Activated naive CD4-positive, alpha-beta T cell treated with anti-CD3 and anti-CD28 coated beads for 36 hours (primary cell): ENCODE measurements at regions of chr20 and their contacts with region 1.

Region 1: GRCh38 chr20:63442100-63442493 is 30.4 kb downstream of the KCNQ2 start:
- DNase-seq: peak; percentile 85
- H3K4me3 Mint-ChIP-seq: no peak overlapping the region
- H3K27ac Mint-ChIP-seq: no peak overlapping the region
- H3K4me1 Mint-ChIP-seq: peaks cover 20% of the 10 kb centered on the region
- H3K27me3 Mint-ChIP-seq: peaks cover 1% of the 10 kb centered on the region

Region 2: DNA sequence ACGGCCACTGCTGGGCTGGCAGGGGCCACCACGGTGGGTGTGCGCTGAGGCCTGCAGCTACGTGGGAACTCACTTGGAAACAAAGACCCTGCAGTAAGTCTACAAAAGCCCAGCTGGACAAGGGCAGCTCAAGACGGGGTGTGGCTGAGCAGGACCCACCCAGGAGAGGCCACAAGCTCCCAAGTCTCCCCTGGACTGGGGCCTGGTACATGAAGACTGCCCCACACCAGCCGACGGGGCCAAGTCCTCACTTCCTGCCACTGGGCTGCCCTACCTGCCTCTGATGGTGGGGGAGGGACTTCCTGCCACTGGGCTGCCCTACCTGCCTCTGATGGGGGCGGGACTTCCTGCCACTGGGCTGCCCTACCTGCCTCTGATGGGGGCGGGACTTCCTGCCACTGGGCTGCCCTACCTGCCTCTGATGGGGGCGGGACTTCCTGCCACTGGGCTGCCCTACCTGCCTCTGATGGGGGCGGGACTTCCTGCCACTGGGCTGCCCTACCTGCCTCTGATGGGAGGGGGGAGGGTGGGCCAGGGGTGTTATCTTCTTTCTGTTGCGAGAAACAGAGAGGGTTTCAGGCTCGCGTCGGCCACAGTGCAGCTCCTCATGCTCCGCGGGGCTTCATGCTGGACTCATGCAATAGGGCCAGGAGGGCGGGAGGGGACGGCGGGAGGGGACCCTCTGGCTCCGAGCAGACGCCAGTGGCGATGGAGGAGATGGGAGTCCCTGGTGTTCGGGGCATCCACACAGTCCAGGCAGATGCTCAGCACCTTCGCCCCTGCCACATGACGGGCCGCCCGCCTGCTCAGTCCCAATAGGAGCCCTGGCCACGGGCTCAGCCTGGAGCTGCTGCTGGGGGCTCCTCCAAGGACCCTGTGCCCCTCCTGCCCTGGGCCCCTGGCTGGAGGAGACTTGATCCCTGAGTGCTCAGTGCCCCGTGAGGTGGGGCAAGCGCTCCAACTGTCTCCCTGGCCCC is 32.4 kb before region 1 on chr20:
- CTCF ChIA-PET with region 1: no interaction called
- intact Hi-C with region 1: no loop called
- DNase-seq: no peak
- H3K4me3 Mint-ChIP-seq: no peak overlapping the region
- H3K27ac Mint-ChIP-seq: no peak overlapping the region
- H3K4me1 Mint-ChIP-seq: peaks cover 8% of the 10 kb centered on the region
- H3K27me3 Mint-ChIP-seq: no peaks in the 10 kb centered on the region

Region 3: DNA sequence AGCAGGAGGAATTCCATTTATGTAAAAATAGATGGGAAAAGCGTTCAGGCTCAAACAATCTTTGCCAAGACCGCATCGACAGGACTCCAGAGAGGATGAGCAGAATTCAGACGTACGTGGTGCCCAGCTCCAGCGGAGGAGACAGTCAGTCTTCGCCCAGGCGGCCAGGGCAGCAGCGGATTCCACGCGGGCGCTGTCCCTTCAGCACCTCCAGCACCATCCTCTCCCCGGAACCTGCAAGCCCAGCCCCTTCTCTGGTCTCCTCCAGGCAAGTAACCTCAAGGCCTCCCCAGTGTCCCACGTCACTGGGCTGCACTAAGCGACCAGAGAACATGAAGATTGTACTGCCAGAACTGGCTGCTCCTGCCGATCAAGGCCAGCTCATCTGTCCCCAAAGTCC is 33.1 kb after region 1 on chr20:
- CTCF ChIA-PET with region 1: interaction called, 3 read pairs
- intact Hi-C with region 1: loop called (anchors 5 kb)
- DNase-seq: no peak
- H3K4me3 Mint-ChIP-seq: no peak overlapping the region
- H3K27ac Mint-ChIP-seq: no peak overlapping the region
- H3K4me1 Mint-ChIP-seq: peaks cover 3% of the 10 kb centered on the region
- H3K27me3 Mint-ChIP-seq: peaks cover 42% of the 10 kb centered on the region

Region 4: DNA sequence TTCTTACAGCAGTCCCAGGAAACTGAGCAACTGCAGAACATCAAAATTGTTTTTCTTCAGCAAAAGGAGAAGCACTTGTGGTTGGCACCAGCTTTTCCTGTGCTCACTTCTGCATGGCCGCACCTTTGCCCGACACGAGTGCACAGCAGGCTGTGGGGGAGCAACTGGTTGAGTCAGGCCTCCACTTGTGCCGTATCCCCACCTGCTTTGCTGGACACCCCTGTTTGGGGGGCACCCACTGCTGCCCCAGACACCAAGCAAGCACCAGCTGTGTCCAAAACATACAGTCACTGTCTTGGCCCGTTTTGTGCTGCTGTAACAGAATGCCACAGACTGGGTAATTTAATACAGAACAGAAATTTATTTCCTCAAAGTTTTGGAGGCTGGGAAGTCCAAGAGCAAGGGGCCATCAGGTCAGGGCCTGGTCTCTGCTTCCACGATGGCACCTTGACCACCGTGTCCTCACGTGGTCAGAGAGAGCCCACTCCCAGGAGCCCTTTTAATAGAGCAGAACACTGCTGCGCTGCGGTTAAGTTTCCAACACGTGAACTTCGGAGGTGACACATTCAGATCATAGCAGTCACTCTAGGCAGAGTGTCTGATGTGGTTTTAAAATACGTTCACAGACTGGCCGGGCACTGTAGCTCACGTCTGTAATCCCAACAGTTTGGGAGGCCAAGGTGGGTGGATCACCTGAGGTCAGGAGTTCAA is 193.5 kb after region 1 on chr20:
- CTCF ChIA-PET with region 1: no interaction called
- intact Hi-C with region 1: loop called (anchors 5 kb)
- DNase-seq: peak; percentile 93
- H3K4me3 Mint-ChIP-seq: peak overlapping the region; percentile 34
- H3K27ac Mint-ChIP-seq: peak overlapping the region; percentile 86
- H3K4me1 Mint-ChIP-seq: peaks cover 68% of the 10 kb centered on the region
- H3K27me3 Mint-ChIP-seq: no peaks in the 10 kb centered on the region